Heart left ventricle (tissue), 16 donors: ENCODE measurements at regions of chr1 and their contacts with region 1.

Region 1: DNA sequence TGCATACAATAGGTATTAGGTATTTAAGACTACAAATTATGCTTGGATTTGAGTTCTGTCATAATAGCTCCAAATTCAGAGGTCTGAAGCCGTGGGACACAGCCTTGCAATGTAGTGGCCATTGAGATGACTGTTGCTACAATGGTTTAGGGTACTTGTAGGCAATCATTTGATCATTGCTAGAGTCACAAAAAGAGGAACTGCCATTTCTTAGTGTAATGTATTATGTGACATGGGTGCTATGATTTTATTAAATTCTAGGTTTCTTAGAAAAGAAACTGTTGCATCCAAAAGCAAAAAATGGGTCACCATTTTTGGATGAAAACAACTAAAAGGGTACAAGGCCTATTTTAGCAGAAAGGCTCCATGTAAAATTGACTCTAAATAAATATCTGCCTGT is 129.9 kb upstream of the ZNF644 start:
- DNase-seq: no peak
- ATAC-seq: no peak
- H3K4me3 ChIP-seq: no peak overlapping the region
- H3K27ac ChIP-seq: no peak overlapping the region
- H3K4me1 ChIP-seq: no peaks in the 10 kb centered on the region
- H3K27me3 ChIP-seq: no peaks in the 10 kb centered on the region
- CTCF ChIP-seq: no peak
- POLR2A ChIP-seq: no peak

Region 2: DNA sequence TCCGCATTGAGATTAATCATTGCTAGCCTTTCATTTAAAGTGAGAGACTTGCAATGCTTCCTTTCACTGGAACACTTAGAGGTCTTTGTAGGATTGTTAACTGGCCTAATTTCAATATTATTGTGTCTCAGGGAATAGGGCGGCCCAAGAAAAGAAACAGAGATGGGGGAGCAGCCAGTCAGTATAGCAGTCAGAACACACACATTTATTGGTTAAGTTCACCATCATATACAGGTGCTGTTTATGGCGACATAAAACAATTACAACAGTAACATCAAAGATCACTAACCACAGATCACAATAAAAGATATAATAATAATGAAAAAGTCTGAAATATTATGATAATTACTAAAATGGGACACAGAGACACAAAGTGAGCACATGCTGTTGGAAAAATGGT is 464.0 kb before region 1 on chr1:
- intact Hi-C with region 1: no loop called
- DNase-seq: no peak
- ATAC-seq: no peak
- H3K4me3 ChIP-seq: no peak overlapping the region
- H3K27ac ChIP-seq: no peak overlapping the region
- H3K4me1 ChIP-seq: no peaks in the 10 kb centered on the region
- H3K27me3 ChIP-seq: peaks cover 0 to 29% (median 11%) of the 10 kb centered on the region in 9 donors
- CTCF ChIP-seq: no peak
- POLR2A ChIP-seq: no peak

Region 3: DNA sequence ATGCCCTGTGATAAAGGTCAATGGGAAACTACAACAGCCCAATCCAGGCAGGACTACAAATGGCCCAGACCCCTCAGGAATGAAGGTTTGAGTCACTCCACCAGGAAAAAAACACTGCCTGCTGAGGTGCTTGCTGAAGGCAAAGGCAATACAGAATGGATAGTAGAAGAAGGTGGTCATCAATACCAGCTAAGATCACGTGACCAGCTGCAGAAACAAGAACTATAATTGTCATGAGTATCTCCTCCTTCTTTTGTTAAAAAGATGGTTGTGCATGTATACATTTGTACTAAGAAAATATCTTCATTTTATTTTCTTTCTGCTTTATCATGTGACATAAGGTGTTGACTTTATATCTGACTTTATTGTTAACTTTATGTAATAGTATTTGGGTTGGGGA is 106.4 kb before region 1 on chr1:
- intact Hi-C with region 1: loop called in 1 of 10 experiments (anchors 10 kb)
- DNase-seq: no peak
- ATAC-seq: no peak
- H3K4me3 ChIP-seq: no peak overlapping the region
- H3K27ac ChIP-seq: no peak overlapping the region
- H3K4me1 ChIP-seq: no peaks in the 10 kb centered on the region
- H3K27me3 ChIP-seq: no peaks in the 10 kb centered on the region
- CTCF ChIP-seq: no peak
- POLR2A ChIP-seq: no peak